Activated naive CD4-positive, alpha-beta T cell treated with anti-CD3 and anti-CD28 coated beads for 36 hours (primary cell): ENCODE measurements at regions of chr12 and their contacts with region 1.

Region 1: DNA sequence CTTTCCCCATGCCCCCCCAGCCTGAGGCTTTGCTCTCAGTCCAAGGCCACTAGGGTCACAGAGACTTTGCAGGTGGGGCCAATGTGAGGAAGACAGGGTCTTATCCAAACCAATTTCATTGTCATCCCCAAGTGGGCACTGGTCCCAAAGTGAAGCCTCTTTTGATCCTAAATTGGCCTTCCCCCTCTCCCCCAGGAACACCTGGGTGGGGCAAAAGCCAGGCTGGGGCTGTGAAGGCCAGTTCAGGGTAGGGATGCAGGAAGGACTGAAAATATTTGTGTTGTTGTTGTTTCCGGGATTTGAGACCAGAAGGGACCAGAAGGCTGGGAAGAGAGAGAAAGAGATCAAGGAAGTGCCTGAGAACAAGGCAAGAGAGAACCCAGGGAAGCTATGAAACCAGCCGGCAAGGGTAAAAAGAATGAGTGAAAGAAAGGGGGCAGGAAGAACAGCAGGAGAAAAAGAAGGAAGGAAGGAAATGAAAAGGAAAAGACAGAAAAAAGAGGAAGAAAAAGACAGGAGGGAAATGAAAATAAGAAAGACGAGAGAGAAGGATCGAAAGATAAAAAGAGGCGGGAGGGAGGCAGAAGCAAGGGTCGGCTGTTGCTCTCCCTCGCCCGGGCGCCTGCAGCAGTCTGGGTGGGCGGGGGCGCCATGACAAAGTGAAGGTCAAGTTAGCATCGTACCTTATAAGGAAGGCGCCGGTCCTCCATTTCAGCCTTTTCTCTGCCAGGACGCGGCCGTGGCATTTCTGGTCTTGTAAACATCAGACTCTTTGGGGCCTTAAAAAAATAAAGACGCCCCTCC is 7.4 kb upstream of the HOXC11 start:
- DNase-seq: no peak
- H3K4me3 Mint-ChIP-seq: no peak overlapping the region
- H3K27ac Mint-ChIP-seq: no peak overlapping the region
- H3K4me1 Mint-ChIP-seq: peaks cover 31% of the 10 kb centered on the region
- H3K27me3 Mint-ChIP-seq: peaks cover 85% of the 10 kb centered on the region

Region 2: GRCh38 chr12:53887006-53887405 is 78.5 kb before region 1 on chr12:
- CTCF ChIA-PET with region 1: no interaction called
- intact Hi-C with region 1: no loop called
- DNase-seq: no peak
- H3K4me3 Mint-ChIP-seq: no peak overlapping the region
- H3K27ac Mint-ChIP-seq: no peak overlapping the region
- H3K4me1 Mint-ChIP-seq: no peaks in the 10 kb centered on the region
- H3K27me3 Mint-ChIP-seq: peaks cover 29% of the 10 kb centered on the region

Region 3: GRCh38 chr12:53930591-53931255 is 34.8 kb before region 1 on chr12:
- CTCF ChIA-PET with region 1: no interaction called
- intact Hi-C with region 1: loop called (anchors 5 kb)
- DNase-seq: no peak
- H3K4me3 Mint-ChIP-seq: no peak overlapping the region
- H3K27ac Mint-ChIP-seq: no peak overlapping the region
- H3K4me1 Mint-ChIP-seq: peaks cover 7% of the 10 kb centered on the region
- H3K27me3 Mint-ChIP-seq: peaks cover 88% of the 10 kb centered on the region

Region 4: GRCh38 chr12:54024127-54024526 is 58.6 kb after region 1 on chr12:
- CTCF ChIA-PET with region 1: no interaction called
- intact Hi-C with region 1: no loop called
- DNase-seq: no peak
- H3K4me3 Mint-ChIP-seq: no peak overlapping the region
- H3K27ac Mint-ChIP-seq: no peak overlapping the region
- H3K4me1 Mint-ChIP-seq: peaks cover 20% of the 10 kb centered on the region
- H3K27me3 Mint-ChIP-seq: peaks cover 83% of the 10 kb centered on the region